ENCODE measurements at regions of chr4 and their contacts with region 1.

Region 1: DNA sequence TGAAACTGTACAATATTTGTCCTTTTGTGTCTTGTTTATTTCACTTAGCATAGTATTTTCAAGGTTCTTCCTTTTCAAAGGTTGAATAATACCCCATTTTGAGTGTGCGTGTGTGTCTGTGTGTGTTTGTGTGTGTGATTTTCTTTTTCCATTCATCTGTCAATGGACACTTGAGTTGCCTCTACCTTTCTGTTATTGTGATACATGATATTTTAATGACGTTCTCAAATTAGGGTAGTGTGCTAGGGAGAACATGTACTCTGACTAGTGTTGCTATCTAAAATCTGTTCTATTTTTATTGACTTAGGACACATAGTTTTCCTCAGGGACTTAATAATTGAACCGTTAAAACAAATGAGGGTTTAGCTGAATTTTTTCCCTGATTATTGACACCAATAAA is 9.9 kb downstream of the MMRN1 start:
- DNase-seq: no peak
- ATAC-seq: no peak
- H3K4me3 ChIP-seq: no peak overlapping the region
- H3K27ac ChIP-seq: no peak overlapping the region
- H3K4me1 ChIP-seq: no peaks in the 10 kb centered on the region
- H3K27me3 ChIP-seq: no peaks in the 10 kb centered on the region
- CTCF ChIP-seq: no peak

Region 2: GRCh38 chr4:89158884-89159503 is 745.5 kb before region 1 on chr4:
- CTCF ChIA-PET with region 1: no interaction called
- POLR2A ChIA-PET with region 1: no interaction called
- in situ Hi-C with region 1: no loop called
- intact Hi-C with region 1: loop called (anchors 5 kb)
- DNase-seq: no peak
- ATAC-seq: no peak
- H3K4me3 ChIP-seq: no peak overlapping the region
- H3K27ac ChIP-seq: no peak overlapping the region
- H3K4me1 ChIP-seq: no peaks in the 10 kb centered on the region
- H3K27me3 ChIP-seq: no peaks in the 10 kb centered on the region
- CTCF ChIP-seq: peak; percentile 68; the same call in 1 of the 2 replicates

Region 3: GRCh38 chr4:89226665-89227574 is 677.6 kb before region 1 on chr4:
- CTCF ChIA-PET with region 1: no interaction called
- POLR2A ChIA-PET with region 1: no interaction called
- in situ Hi-C with region 1: no loop called
- intact Hi-C with region 1: loop called (anchors 5 kb)
- DNase-seq: peak; percentile 48
- ATAC-seq: peak; percentile 93
- H3K4me3 ChIP-seq: no peak overlapping the region
- H3K27ac ChIP-seq: no peak overlapping the region
- H3K4me1 ChIP-seq: no peaks in the 10 kb centered on the region
- H3K27me3 ChIP-seq: no peaks in the 10 kb centered on the region
- CTCF ChIP-seq: peak; percentile 75

Region 4: GRCh38 chr4:89434364-89434988 is 470.0 kb before region 1 on chr4:
- CTCF ChIA-PET with region 1: no interaction called
- POLR2A ChIA-PET with region 1: no interaction called
- in situ Hi-C with region 1: no loop called
- intact Hi-C with region 1: loop called (anchors 5 kb)
- DNase-seq: no peak
- ATAC-seq: no peak
- H3K4me3 ChIP-seq: no peak overlapping the region
- H3K27ac ChIP-seq: no peak overlapping the region
- H3K4me1 ChIP-seq: no peaks in the 10 kb centered on the region
- H3K27me3 ChIP-seq: no peaks in the 10 kb centered on the region
- CTCF ChIP-seq: peak; percentile 66; the same call in 1 of the 2 replicates

Region 5: DNA sequence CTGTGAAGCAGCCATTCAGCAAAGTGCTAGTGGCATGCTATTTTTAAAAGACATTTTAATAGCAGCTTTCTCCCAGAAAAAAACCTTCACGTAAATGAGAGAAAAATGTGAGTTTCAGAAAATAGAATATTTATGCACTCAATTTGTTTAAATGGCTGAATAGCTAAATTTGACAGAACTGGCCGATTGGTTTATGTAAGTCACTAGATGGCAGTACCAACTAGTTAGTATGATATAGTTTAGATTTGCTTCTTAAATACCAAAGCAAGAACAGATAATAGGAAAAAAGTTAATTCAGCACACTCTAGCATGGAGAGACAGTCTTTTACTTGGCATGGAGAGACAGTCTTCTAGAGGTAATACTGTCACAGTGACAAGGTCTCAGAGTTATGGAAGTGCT is 317.7 kb before region 1 on chr4:
- CTCF ChIA-PET with region 1: no interaction called
- POLR2A ChIA-PET with region 1: no interaction called
- in situ Hi-C with region 1: no loop called
- intact Hi-C with region 1: loop called (anchors 5 kb)
- DNase-seq: no peak
- ATAC-seq: no peak
- H3K4me3 ChIP-seq: no peak overlapping the region
- H3K27ac ChIP-seq: no peak overlapping the region
- H3K4me1 ChIP-seq: no peaks in the 10 kb centered on the region
- H3K27me3 ChIP-seq: no peaks in the 10 kb centered on the region
- CTCF ChIP-seq: peak; percentile 25; the same call in 1 of the 2 replicates

Region 6: DNA sequence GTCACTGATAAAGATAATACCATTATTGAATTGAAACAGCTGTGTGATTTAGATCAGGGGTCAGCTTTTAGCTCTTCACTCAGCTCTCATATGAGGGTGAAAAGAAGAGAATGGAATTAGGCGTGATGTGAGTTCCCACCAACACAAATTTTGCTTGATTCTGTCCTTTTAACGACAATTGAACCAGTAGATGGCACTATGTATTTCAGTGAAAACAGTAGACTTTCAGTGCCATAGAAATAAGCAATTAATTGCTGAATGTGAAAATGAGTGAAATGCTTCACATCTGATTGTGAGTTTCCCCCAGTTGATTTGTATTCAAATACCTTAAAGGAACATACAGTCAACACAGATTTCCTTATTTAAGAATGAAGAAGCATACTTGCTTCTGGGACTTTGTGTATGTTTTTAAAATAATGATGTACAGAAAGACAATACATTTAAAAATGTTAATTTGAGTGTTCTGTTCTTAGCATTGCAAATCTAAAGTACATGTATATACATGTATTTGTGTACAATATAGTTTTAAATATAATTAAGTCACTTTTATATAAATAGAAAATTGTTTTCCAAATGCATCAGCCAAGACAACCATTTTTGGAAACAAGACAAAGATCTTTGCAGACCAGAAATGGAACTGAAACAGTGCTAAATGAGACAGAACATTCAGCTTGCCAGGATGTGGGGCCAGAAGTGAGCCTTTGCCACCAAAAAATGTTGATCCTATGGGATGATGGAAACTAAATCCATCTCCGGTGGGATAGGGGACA is 246.4 kb before region 1 on chr4:
- CTCF ChIA-PET with region 1: no interaction called
- POLR2A ChIA-PET with region 1: no interaction called
- in situ Hi-C with region 1: no loop called
- intact Hi-C with region 1: loop called (anchors 5 kb)
- DNase-seq: no peak
- ATAC-seq: no peak
- H3K4me3 ChIP-seq: no peak overlapping the region
- H3K27ac ChIP-seq: no peak overlapping the region
- H3K4me1 ChIP-seq: no peaks in the 10 kb centered on the region
- H3K27me3 ChIP-seq: no peaks in the 10 kb centered on the region
- CTCF ChIP-seq: peak; percentile 20; the same call in 1 of the 2 replicates

Region 7: GRCh38 chr4:91070736-91071135 is 1166.2 kb after region 1 on chr4:
- CTCF ChIA-PET with region 1: no interaction called
- POLR2A ChIA-PET with region 1: no interaction called
- in situ Hi-C with region 1: no loop called
- intact Hi-C with region 1: no loop called
- DNase-seq: no peak
- ATAC-seq: no peak
- H3K4me3 ChIP-seq: no peak overlapping the region
- H3K27ac ChIP-seq: no peak overlapping the region
- H3K4me1 ChIP-seq: no peaks in the 10 kb centered on the region
- H3K27me3 ChIP-seq: no peaks in the 10 kb centered on the region
- CTCF ChIP-seq: no peak

Measured in Panc1 (cell line).